ENCODE measurements at regions of chr9 and their contacts with region 1.

Region 1: DNA sequence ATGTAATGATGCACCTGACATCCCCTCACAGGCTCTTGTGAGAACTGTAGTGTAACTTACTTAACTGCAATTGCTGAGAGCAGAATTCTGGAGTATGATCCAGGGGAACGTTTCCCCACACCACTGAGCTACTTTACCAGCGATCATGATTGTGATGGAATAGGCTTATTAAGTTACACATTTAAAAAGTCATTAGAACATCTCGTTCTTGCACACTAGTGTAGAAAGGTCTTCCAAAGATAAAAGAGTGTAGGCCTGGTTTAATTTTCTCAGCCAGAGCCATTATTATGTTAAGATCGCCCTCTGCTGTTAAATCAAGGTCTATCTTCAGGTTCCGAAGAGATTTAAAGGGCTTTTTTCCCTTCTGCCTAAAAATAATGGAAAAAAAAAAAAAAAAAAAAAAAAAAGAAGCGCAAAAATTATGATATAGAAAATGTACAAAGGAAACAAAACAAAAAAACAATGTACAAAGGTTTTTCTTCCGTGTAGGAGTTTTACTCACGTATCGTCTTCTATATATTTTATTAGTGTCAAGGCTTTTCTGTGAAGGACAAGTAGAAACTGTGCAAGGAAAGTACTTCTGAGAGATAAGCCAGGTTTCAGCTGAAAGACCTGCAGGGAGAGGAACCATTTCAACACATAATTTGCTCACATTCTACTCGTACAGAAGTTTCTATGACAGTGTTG is 18.6 kb upstream of the MOB3B start:
- DNase-seq: no peak
- H3K4me3 ChIP-seq: no peak overlapping the region
- H3K27ac ChIP-seq: peak overlapping the region in 46 of 59 donors; percentile 1 to 75 (median 45)
- H3K27me3 ChIP-seq: no peaks in the 10 kb centered on the region
- CTCF ChIP-seq: peak; percentile 40 to 82 (median 67)

Region 2: DNA sequence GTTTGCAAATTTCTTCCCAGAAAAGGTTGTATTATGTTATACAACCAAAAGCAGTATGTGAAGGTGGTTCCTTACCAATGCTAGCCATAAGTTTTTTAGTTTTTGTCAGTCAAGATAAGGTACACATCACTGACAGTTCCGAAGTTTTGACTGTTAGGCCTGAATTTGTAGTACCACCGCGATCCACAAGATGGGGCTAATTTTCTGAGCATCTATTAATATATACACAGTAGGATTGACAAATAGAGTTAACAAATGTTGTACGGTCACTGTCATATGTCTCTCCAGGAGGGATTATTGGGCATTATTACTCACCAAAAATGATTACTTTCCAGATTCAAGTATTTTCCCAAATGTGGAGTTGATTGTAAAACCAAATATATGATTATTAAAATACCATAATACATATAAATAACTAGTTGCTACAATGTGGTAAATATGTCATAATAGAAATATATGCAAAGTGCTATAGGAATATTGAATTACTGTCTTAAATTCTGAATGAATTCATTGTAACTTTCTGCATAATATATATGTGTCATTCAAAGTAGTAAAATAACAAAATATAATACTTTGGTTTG is 514.3 kb before region 1 on chr9:
- intact Hi-C with region 1: loop called in 1 of 2 experiments (anchors 5 kb)
- DNase-seq: peak in 6 of 10 donors; percentile 31 to 76 (median 55)
- H3K4me3 ChIP-seq: no peak overlapping the region
- H3K27ac ChIP-seq: no peak overlapping the region
- H3K27me3 ChIP-seq: no peaks in the 10 kb centered on the region
- CTCF ChIP-seq: peak; percentile 69 to 88 (median 81)

Region 3: GRCh38 chr9:27247756-27248155 is 300.4 kb before region 1 on chr9:
- intact Hi-C with region 1: loop called in 1 of 2 experiments (anchors 10 kb)
- DNase-seq: peak in 1 of 10 donors; percentile 10
- H3K4me3 ChIP-seq: no peak overlapping the region
- H3K27ac ChIP-seq: no peak overlapping the region
- H3K27me3 ChIP-seq: no peaks in the 10 kb centered on the region
- CTCF ChIP-seq: peak in 55 of 56 donors; percentile 21 to 67 (median 52)

Region 4: GRCh38 chr9:27276193-27277030 is 271.8 kb before region 1 on chr9:
- intact Hi-C with region 1: loop called in 1 of 2 experiments (anchors 10 kb)
- DNase-seq: no peak
- H3K4me3 ChIP-seq: peak overlapping the region in 55 of 59 donors; percentile 7 to 61 (median 38)
- H3K27ac ChIP-seq: peak overlapping the region in 2 of 59 donors; percentile 1 to 10
- H3K27me3 ChIP-seq: no peaks in the 10 kb centered on the region
- CTCF ChIP-seq: peak; percentile 68 to 99 (median 84)

Region 5: DNA sequence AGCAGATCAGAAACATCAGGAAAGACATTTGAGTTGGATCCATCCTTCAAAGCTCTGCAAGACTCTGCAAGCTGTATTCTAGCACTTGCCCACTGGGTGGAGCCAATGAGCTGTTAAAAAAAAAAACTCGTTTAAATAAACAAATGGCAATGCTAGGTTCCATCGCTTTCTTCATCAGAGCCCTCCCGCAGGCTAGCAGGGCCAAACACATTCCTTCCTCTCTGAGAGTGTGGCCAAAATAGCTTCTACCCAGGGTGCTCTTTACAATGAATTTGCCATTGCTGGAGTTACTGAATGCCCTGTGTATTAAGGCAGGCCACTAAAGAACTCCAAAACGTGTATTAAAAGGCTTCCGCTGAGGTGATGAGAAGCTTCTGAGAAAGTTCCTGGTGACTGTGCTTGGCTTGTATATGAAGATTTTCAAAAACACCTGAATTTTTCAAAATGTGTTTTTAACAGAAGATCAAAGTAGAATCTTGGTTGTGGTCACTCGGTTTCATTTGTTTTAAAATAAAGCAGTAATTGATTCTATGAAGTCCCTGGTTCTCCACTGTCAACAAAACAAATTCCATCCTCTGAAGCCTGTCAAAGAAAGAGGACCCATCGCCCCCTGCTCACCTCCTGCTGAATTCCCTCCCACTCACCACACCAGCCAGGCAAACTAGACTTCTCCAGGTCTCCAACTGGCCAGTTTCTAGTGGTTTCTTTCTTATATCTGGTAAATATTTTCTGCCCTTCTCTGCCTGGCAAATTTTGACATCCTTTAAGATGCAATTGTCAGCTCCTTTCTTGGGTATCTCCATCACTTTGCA is 214.8 kb before region 1 on chr9:
- intact Hi-C with region 1: loop called (anchors 2 to 5 kb)
- DNase-seq: peak in 6 of 10 donors; percentile 38 to 68 (median 62)
- H3K4me3 ChIP-seq: peak overlapping the region in 8 of 59 donors; percentile 3 to 41 (median 27)
- H3K27ac ChIP-seq: peak overlapping the region in 58 of 59 donors; percentile 22 to 95 (median 64)
- H3K27me3 ChIP-seq: no peaks in the 10 kb centered on the region
- CTCF ChIP-seq: peak; percentile 69 to 99 (median 96)